ENCODE measurements at regions of chr17 and their contacts with region 1.

Region 1: DNA sequence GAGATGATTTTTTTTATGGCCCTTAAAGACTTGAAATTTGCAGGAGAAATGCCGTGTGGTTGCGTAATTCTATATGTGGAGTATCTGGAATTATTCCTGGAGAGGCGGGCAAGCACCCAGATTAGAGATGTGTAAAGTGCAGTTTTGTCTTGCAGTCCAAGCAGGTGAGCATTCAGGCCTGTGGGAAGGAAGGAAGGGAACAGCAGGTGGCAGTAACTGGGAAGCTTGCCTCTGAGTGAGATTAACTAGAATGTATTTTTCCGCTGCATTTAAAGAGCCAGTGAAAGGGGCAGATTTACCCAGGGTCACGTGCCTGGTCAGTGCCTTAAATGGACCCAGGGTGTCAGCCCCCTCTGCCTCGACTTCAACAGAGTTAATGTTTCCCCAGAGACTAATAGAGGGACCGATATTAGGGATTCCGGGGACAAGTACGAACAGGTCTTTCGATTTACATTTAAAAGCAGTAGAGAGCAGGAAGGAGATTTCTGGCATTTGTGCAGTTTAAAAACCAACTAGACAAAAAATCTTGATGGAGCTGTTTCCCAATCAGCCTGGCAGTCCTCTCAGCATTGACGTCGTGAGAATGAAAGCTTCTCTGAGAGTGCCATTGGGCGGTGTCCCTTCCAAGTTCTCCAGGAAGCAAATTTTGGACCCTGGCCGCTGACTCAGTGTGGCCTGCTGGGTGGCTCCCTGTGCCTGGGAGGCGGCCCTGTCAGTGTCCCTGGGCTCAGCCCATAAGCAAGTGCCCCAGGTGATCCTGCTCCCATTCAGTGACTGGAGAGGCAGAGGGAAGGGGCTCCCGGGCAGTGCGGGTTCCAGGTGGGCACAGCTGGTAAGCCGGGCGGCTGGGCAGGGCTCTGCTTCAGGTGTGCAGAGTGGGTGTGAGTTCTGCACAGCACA is 38.2 kb downstream of the KSR1 start:
- DNase-seq: peak; percentile 92 to 96
- H3K4me3 ChIP-seq: peak overlapping the region; percentile 19 to 29
- H3K27ac ChIP-seq: peak overlapping the region; percentile 82 to 89
- H3K4me1 ChIP-seq: peaks cover 0 to 37% (median 20%) of the 10 kb centered on the region in 4 donors
- H3K27me3 ChIP-seq: no peaks in the 10 kb centered on the region
- CTCF ChIP-seq: peak; percentile 54 to 60

Region 2: GRCh38 chr17:27245230-27245696 is 249.2 kb before region 1 on chr17:
- intact Hi-C with region 1: loop called (anchors 10 kb)
- DNase-seq: peak; percentile 86 to 95
- H3K4me3 ChIP-seq: peak overlapping the region; percentile 8 to 32
- H3K27ac ChIP-seq: peak overlapping the region; percentile 93 to 96
- H3K4me1 ChIP-seq: peaks cover 6 to 94% (median 59%) of the 10 kb centered on the region in 4 donors
- H3K27me3 ChIP-seq: no peaks in the 10 kb centered on the region
- CTCF ChIP-seq: peak; percentile 46 to 59

Region 3: GRCh38 chr17:27353461-27354050 is 140.9 kb before region 1 on chr17:
- intact Hi-C with region 1: loop called (anchors 10 kb)
- DNase-seq: peak; percentile 90 to 97
- H3K4me3 ChIP-seq: peak overlapping the region; percentile 67 to 87
- H3K27ac ChIP-seq: peak overlapping the region; percentile 96 to 97
- H3K4me1 ChIP-seq: peaks cover 0 to 23% (median 16%) of the 10 kb centered on the region in 4 donors
- H3K27me3 ChIP-seq: no peaks in the 10 kb centered on the region
- CTCF ChIP-seq: peak; percentile 95 to 99

Region 4: GRCh38 chr17:27455914-27456680 is 38.3 kb before region 1 on chr17 and contains the start of gene KSR1:
- intact Hi-C with region 1: loop called (anchors 5 kb)
- DNase-seq: peak; percentile 79 to 88
- H3K4me3 ChIP-seq: peak within 1 kb of the TSS; percentile 83 to 95
- H3K27ac ChIP-seq: peak within 1 kb of the TSS; percentile 87 to 95
- H3K4me1 ChIP-seq: peaks cover 0 to 25% (median 18%) of the 10 kb centered on the region in 4 donors
- H3K27me3 ChIP-seq: no peaks in the 10 kb centered on the region
- CTCF ChIP-seq: peak; percentile 5 to 8

Region 5: GRCh38 chr17:27532269-27533263 is 38.1 kb after region 1 on chr17:
- intact Hi-C with region 1: loop called (anchors 5 kb)
- DNase-seq: peak; percentile 17 to 31
- H3K4me3 ChIP-seq: no peak overlapping the region
- H3K27ac ChIP-seq: peak overlapping the region; percentile 75
- H3K4me1 ChIP-seq: peaks cover 0 to 75% (median 33%) of the 10 kb centered on the region in 4 donors
- H3K27me3 ChIP-seq: no peaks in the 10 kb centered on the region
- CTCF ChIP-seq: no peak

Measured in tibial artery (tissue), 4 donors.